ENCODE measurements at regions of chr10 and their contacts with region 1.

Region 1: DNA sequence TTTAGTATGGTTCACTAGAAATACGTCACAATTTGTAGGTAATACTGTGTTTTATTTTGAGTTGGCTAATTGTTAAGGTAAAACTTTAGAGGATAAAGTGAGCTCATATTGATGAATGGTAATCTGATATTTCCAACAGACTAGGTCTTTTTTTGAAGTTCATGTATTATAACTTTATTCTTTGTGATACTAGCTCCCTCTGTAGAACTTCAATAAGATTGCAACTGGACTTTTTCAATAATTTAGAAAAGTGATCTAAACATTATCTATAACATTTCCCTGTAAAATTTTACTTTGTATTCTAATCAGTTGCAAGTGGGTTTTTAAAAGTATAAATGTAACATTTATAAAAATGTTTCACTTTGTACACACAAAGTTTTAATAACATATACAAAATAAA is 83.5 kb downstream of the ADK start:
- DNase-seq: no peak
- H3K4me3 ChIP-seq: no peak overlapping the region
- H3K27ac ChIP-seq: no peak overlapping the region
- H3K4me1 ChIP-seq: no peaks in the 10 kb centered on the region
- H3K27me3 ChIP-seq: no peaks in the 10 kb centered on the region
- CTCF ChIP-seq: peak in 3 of 4 experiments; percentile 23 to 57 (median 42)
- POLR2A ChIP-seq: no peak

Region 2: DNA sequence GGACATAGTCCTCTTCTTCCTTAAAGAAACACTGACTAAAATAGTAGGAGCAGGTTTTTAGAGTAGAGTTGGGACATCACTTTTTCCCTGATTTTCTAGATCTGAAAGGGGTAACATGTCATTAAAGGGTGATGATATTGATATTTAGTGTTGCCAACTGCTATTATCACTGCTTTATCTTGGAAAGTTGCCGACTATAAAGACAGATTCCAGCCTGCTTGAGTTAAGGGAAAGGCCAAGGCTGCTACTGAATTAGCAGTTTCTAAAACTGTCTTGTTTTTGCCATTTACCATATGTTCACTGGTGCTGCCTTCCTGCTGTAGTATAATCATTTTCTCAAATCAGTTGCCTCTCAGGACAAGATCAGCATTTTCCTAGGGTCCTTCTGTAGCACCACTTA is 113.7 kb before region 1 on chr10:
- intact Hi-C with region 1: loop called (anchors 10 kb)
- DNase-seq: no peak
- H3K4me3 ChIP-seq: no peak overlapping the region
- H3K27ac ChIP-seq: peak overlapping the region in 1 of 2 donors; percentile 1
- H3K4me1 ChIP-seq: peaks cover 7% of the 10 kb centered on the region
- H3K27me3 ChIP-seq: no peaks in the 10 kb centered on the region
- CTCF ChIP-seq: no peak
- POLR2A ChIP-seq: no peak

Measured in prostate gland (tissue), 2 donors.